SK-N-SH (cell line): ENCODE measurements at regions of chr11 and their contacts with region 1.

Region 1: GRCh38 chr11:118171269-118172062 is 5.0 kb downstream of the SCN2B start:
- DNase-seq: peak; percentile 93
- H3K4me3 ChIP-seq: peak overlapping the region in 1 of 2 experiments; percentile 46; a peak in 1 of 4 replicates
- H3K27ac ChIP-seq: no peak overlapping the region
- H3K4me1 ChIP-seq: peaks cover 0 to 6% of the 10 kb centered on the region in 2 experiments; a peak in 1 of 4 replicates
- H3K27me3 ChIP-seq: peaks cover 44% of the 10 kb centered on the region
- CTCF ChIP-seq: peak; percentile 89
- EP300 ChIP-seq: no peak
- RAD21 ChIP-seq: peak; percentile 86

Region 2: DNA sequence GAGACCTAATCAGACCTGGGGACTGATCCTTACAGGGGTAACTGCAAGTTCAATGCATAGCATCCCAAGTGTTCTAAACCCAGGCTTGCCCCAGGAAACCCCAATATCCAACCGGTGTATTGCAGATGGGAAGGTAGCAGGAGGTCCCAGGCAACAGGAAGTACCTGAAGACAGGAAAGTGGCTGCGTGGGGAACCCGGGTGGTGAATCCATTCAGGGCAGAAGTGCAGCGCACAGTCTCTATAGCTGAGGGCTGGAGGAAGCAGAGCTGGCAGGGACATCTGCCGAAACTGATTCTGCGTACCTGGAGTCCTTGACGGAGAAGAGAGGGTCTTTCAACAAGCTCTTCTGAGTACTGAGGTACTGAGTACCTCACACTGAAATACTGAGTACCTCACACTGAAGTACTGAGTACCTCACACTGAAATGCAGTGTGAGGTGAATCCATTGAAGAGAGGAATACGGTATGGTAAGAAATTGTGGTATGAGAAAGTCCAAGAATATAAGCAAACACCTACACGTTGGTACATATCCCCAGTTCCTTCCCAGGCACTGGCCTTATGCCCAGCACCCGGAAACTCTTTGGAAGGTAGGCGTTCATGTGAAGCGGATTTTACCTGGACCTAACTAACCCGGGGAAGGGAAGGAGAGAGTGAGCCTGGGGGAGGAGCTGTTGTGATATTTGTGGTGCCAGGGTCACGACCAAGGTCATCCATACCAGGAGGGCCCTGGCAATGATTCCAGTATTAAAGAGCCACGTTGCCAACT is 38.9 kb before region 1 on chr11:
- CTCF ChIA-PET with region 1: interaction called, 246 read pairs
- POLR2A ChIA-PET with region 1: interaction called, 3 read pairs
- DNase-seq: no peak
- H3K4me3 ChIP-seq: no peak overlapping the region
- H3K27ac ChIP-seq: no peak overlapping the region
- H3K4me1 ChIP-seq: no peaks in the 10 kb centered on the region
- H3K27me3 ChIP-seq: peaks cover 35% of the 10 kb centered on the region
- CTCF ChIP-seq: no peak
- EP300 ChIP-seq: no peak
- RAD21 ChIP-seq: no peak

Region 3: GRCh38 chr11:118145285-118146227 is 25.9 kb before region 1 on chr11:
- CTCF ChIA-PET with region 1: interaction called, 246 read pairs
- POLR2A ChIA-PET with region 1: no interaction called
- DNase-seq: peak; percentile 95
- H3K4me3 ChIP-seq: peak overlapping the region; percentile 61 to 89
- H3K27ac ChIP-seq: no peak overlapping the region
- H3K4me1 ChIP-seq: peaks cover 0 to 4% of the 10 kb centered on the region in 2 experiments; a peak in 1 of 4 replicates
- H3K27me3 ChIP-seq: peaks cover 19% of the 10 kb centered on the region; the same call in 1 of the 2 replicates
- CTCF ChIP-seq: peak; percentile 91
- EP300 ChIP-seq: no peak
- RAD21 ChIP-seq: peak; percentile 97

Region 4: DNA sequence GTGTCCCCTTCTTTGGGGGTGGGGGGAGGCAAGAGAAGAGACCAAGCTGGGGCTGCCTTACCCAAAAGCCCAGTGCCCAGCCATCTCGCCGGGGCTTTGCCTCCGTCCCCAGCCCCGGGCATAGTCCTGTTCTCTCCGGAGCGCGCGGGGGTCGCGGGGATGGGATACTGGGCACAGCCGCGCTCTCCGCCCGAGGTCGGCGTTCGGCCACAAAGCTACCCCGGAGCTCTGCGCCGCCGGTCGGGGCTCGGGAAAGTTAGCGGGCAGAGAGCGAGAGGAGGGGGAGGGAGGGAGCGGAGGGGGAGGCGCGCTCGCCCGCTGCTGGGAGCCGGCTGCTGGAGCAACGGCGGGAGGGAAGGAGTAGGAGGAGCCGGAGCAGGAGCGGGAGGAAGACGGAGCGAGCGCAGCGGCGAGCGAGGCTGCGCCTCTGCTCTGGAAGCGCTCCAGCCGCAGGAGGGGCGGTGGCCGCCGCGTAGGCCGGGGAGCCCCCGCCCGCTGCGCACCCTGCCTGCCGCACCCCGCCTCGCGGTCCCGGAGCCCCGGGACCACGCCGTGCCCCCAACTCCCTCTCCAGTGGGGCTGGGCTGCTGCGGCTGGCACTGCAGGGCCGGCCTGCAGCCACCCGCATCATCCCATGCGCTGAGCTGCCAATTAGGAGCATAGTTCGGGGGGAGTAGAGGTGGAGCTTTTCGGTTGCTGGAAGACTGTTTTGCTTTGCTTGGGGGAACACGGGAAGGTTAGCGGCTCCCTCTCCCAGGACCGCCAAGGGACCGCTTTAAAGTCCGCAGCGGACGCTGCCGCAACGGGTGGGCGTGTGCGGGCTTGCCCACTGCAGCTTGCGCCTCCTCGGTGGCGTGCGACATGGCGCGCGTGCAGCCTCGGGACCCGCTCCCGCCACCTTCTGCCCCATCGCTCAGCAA is 18.7 kb before region 1 on chr11 and contains the start of gene SCN4B:
- CTCF ChIA-PET with region 1: interaction called, 246 read pairs
- POLR2A ChIA-PET with region 1: interaction called, 3 read pairs
- DNase-seq: peak; percentile 94
- H3K4me3 ChIP-seq: peak within 1 kb of the TSS; percentile 54 to 63
- H3K27ac ChIP-seq: no peak within 1 kb of the TSS; a peak in 1 of 4 replicates
- H3K4me1 ChIP-seq: peaks cover 0 to 16% of the 10 kb centered on the region in 2 experiments; a peak in 1 of 4 replicates
- H3K27me3 ChIP-seq: peaks cover 60% of the 10 kb centered on the region
- CTCF ChIP-seq: no peak
- EP300 ChIP-seq: no peak
- RAD21 ChIP-seq: no peak
- polyA plus RNA-seq, gene SCN4B: 1.2 and 2.0 TPM in 2 replicates

Region 5: DNA sequence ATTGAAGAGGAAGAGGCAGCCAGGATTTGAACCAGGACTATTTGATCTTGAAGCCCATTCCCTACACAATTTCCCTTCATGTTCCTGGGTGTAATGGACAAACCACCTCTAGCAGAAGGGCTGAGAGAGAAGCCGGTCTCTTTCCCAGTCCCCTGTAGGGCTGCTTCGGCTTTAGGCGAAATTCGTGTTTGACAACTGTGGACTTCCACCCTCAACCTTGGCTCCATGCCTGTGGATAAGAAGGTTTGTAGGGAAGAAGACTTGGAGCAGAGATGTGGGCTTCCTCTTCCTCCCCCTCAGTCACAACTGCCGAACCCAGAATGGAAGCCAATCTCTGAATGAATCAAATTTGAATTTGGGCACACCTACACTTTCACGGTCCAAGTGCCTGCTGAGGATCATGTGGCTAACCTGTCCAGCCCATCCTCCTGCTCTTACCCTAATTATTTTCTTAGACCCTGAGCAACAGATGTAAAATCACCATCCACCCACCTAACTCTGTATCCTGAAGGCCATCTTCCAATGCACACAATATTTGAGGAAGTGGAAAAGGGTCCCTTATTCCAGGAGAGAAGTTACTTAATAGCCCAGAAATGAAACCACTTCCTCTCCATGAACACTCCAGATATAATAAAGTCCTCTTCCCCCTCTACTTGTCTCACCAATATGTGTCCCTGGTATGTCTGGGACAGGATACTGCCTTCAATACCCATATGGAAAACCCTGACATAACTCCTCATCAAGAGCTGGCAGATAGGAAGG is 15.1 kb after region 1 on chr11:
- CTCF ChIA-PET with region 1: interaction called, 48 read pairs
- POLR2A ChIA-PET with region 1: no interaction called
- DNase-seq: no peak
- H3K4me3 ChIP-seq: no peak overlapping the region
- H3K27ac ChIP-seq: no peak overlapping the region
- H3K4me1 ChIP-seq: no peaks in the 10 kb centered on the region
- H3K27me3 ChIP-seq: peaks cover 27% of the 10 kb centered on the region; the same call in 1 of the 2 replicates
- CTCF ChIP-seq: no peak
- EP300 ChIP-seq: no peak
- RAD21 ChIP-seq: no peak